Transverse colon (tissue), 4 donors: ENCODE measurements at regions of chr21 and their contacts with region 1.

Region 1: GRCh38 chr21:45590246-45590725 is 48.0 kb upstream of the SLC19A1 start:
- DNase-seq: peak; percentile 59
- H3K4me3 ChIP-seq: peak overlapping the region; percentile 30 to 51 (median 34)
- H3K27ac ChIP-seq: peak overlapping the region in 2 of 4 donors; percentile 9 to 11
- H3K4me1 ChIP-seq: peaks cover 0 to 15% (median 8%) of the 10 kb centered on the region in 4 donors
- H3K27me3 ChIP-seq: peaks cover 16% of the 10 kb centered on the region
- CTCF ChIP-seq: no peak
- EP300 ChIP-seq: no peak
- POLR2A ChIP-seq: no peak

Region 2: DNA sequence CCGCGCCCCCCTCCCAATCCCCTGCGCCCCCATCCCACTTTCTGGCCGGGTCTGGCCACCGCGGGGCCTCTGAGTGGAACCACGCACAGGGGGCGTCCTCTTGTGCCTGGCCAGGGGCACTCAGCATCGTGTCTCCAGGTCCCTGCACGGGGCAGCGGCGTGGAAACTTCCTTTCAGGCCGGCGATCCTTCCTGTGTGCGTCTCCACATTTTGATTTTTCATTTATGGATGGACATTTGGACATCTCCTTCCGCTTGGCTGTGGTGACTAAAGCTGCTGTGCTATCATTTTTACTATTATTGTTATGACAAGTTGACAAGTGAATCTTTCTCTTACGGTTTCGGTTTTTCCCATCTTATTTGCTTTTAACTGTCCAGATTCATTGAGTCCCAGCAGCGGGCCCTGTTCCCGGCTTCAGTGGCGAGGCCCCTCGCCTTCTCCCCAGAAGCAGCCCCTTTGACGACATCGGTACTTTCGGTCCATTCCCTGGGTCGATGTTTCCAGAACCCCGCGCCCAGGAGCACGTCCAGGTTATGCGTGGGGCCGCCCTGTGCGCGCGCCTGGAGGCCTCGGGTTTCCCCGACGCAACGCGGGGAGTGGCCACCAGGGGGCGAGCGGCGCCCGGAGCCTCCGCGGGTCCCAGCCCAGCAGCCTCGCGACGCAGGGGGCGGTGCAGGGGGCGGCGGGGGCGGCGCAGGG is 35.7 kb before region 1 on chr21:
- in situ Hi-C with region 1: loop called in 1 of 4 experiments (anchors 5 kb)
- intact Hi-C with region 1: loop called (anchors 2 kb)
- DNase-seq: peak; percentile 88
- H3K4me3 ChIP-seq: peak overlapping the region; percentile 16 to 78 (median 47)
- H3K27ac ChIP-seq: peak overlapping the region; percentile 71 to 79 (median 76)
- H3K4me1 ChIP-seq: peaks cover 0 to 18% (median 11%) of the 10 kb centered on the region in 4 donors
- H3K27me3 ChIP-seq: no peaks in the 10 kb centered on the region
- CTCF ChIP-seq: peak; percentile 76 to 89 (median 85)
- EP300 ChIP-seq: no peak
- POLR2A ChIP-seq: no peak